ENCODE measurements at regions of chr1 and their contacts with region 1.

Region 1: DNA sequence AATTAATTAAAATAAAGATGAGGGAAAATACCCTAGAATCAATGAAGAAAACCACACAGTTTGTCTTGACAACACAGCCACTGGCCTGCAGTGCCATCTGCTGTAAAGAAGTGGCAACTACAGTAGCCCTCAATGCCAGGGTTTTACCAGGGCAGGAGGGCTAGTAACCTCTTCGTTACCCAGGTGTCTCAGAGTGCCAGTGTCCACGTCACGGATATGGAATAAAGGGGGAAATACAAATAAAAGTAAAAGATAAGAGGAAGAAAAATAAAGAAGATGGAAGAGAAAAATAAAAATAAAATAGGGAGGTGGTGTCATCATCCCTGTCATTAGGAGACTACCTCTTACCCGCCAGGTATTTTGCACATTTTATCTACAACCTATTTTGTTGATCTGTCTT is 14.2 kb upstream of the SLC44A3 start:
- DNase-seq: peak; percentile 26 to 43
- ATAC-seq: peak; percentile 38 to 53; a peak in 3 of 6 replicates
- H3K4me3 ChIP-seq: no peak overlapping the region
- H3K27ac ChIP-seq: no peak overlapping the region
- H3K4me1 ChIP-seq: peaks cover 9% of the 10 kb centered on the region; the same call in 2 of the 3 replicates
- CTCF ChIP-seq: peak; percentile 88
- EP300 ChIP-seq: no peak
- POLR2A ChIP-seq: no peak
- RAD21 ChIP-seq: peak; percentile 90 to 93

Region 2: DNA sequence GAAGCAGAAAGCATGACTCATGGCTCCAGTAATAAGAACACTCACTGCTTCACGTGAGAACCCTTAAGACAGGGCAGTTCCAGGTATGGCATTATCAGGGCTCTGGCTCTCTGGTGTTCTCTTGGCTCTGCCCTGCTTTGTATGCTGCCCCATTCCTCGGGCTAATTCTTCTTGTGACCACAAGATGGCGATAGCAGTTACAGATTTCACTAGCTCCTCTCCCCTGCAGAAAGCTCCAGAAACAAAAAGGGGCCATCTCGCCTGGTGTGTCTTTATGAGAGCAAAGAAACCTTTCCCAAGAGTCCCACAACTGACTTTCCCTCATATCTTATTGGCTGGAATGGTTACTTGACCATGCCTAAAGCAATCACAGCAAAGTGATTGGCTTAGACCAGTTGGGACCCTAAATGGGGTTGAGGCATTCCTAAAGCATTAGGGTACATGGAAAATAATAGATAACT is 324.4 kb before region 1 on chr1:
- CTCF ChIA-PET with region 1: interaction called, 80 read pairs
- POLR2A ChIA-PET with region 1: no interaction called
- DNase-seq: peak; percentile 37 to 66
- ATAC-seq: peak; percentile 89 to 96
- H3K4me3 ChIP-seq: no peak overlapping the region
- H3K27ac ChIP-seq: no peak overlapping the region
- H3K4me1 ChIP-seq: no peaks in the 10 kb centered on the region
- CTCF ChIP-seq: peak; percentile 67
- EP300 ChIP-seq: no peak
- POLR2A ChIP-seq: no peak
- RAD21 ChIP-seq: peak; percentile 56 to 62

Region 3: DNA sequence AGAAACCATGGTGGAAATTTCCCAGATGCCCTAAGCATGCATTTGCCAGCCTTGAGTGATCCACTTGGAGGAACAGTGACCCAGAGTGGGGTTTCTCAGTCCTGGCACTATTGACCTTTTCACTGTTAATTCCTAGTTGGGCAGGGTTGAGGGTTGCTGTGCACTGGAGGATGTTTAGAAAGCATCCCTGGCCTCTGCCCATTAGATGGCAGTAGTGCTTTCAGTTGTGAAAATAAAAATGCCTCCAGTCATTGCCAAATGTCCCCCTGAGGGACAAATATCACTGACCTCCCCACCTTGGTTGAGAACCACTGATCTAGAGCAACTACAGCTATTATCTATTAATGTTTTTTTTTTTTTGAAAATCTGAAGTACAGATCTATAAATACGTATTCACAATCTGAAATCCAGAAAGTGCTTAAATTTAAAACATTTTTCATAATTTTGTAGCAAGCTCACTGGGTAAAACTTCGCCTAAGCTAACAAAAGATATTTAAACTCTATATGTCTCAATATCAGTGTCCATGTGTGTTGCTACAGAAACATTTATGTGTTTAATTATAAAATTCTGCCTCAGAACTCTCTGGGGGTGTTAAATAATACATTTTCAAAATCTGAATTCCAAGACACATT is 291.7 kb before region 1 on chr1:
- CTCF ChIA-PET with region 1: interaction called, 75 read pairs
- POLR2A ChIA-PET with region 1: no interaction called
- DNase-seq: peak; percentile 7 to 30
- ATAC-seq: peak; percentile 50 to 76; a peak in 5 of 6 replicates
- H3K4me3 ChIP-seq: no peak overlapping the region
- H3K27ac ChIP-seq: no peak overlapping the region
- H3K4me1 ChIP-seq: 0 out of 3 replicates have a peak, but pooled peaks cover 4% of the 10 kb centered on the region
- CTCF ChIP-seq: peak; percentile 66
- EP300 ChIP-seq: no peak
- POLR2A ChIP-seq: no peak
- RAD21 ChIP-seq: peak; percentile 67 to 69

Region 4: GRCh38 chr1:94527447-94528031 is 278.4 kb before region 1 on chr1:
- CTCF ChIA-PET with region 1: interaction called, 89 read pairs
- POLR2A ChIA-PET with region 1: no interaction called
- DNase-seq: no peak
- ATAC-seq: peak in 1 of 2 experiments; percentile 54; a peak in 2 of 6 replicates
- H3K4me3 ChIP-seq: no peak overlapping the region
- H3K27ac ChIP-seq: no peak overlapping the region
- H3K4me1 ChIP-seq: 0 out of 3 replicates have a peak, but pooled peaks cover 3% of the 10 kb centered on the region
- CTCF ChIP-seq: no peak; the same call in 2 of the 3 replicates
- EP300 ChIP-seq: no peak
- POLR2A ChIP-seq: no peak
- RAD21 ChIP-seq: no peak

Region 5: DNA sequence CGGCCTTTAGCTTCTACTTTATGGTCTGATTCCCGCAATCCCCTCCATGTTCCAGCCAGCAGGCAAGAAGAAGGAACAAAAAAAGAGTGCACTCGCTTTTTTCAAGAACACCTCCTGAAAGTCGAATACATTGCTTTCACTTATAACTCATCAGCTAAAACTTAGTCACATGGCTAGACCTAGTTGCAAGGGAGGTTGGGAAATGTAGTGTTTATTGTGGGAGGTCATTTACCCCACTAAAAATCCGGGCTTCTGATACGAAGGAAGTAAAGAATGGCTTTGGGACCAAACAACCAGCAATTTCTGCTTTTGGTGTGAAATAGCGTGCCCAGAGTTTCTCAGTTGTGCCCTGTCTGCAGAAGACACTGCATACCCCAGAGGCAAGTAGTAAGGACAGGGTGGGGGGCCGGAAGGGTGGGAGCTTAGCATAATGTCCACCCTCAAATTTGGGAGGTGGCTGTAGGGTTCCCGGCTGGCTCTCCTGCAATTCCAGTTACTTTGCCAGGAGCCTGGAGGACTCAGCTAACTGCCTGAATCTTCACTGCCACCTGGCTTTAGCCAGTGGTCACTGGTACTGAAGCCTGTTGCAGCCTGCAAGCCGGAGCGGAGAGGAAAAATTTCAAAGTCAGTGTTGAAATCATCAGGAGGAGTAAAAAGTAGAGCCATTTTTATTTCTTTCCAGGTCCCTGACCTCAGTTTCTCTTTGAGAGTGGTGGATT is 206.7 kb before region 1 on chr1:
- CTCF ChIA-PET with region 1: interaction called, 18 read pairs
- POLR2A ChIA-PET with region 1: no interaction called
- DNase-seq: peak; percentile 10 to 37
- ATAC-seq: peak; percentile 72 to 84; a peak in 4 of 6 replicates
- H3K4me3 ChIP-seq: no peak overlapping the region
- H3K27ac ChIP-seq: no peak overlapping the region
- H3K4me1 ChIP-seq: no peaks in the 10 kb centered on the region
- CTCF ChIP-seq: no peak; the same call in 2 of the 3 replicates
- EP300 ChIP-seq: no peak
- POLR2A ChIP-seq: no peak
- RAD21 ChIP-seq: peak; percentile 58 to 63

Measured in A549 (cell line).